Cardiac septum (tissue), 1 donor: ENCODE measurements at regions of chr13 and their contacts with region 1.

Region 1: DNA sequence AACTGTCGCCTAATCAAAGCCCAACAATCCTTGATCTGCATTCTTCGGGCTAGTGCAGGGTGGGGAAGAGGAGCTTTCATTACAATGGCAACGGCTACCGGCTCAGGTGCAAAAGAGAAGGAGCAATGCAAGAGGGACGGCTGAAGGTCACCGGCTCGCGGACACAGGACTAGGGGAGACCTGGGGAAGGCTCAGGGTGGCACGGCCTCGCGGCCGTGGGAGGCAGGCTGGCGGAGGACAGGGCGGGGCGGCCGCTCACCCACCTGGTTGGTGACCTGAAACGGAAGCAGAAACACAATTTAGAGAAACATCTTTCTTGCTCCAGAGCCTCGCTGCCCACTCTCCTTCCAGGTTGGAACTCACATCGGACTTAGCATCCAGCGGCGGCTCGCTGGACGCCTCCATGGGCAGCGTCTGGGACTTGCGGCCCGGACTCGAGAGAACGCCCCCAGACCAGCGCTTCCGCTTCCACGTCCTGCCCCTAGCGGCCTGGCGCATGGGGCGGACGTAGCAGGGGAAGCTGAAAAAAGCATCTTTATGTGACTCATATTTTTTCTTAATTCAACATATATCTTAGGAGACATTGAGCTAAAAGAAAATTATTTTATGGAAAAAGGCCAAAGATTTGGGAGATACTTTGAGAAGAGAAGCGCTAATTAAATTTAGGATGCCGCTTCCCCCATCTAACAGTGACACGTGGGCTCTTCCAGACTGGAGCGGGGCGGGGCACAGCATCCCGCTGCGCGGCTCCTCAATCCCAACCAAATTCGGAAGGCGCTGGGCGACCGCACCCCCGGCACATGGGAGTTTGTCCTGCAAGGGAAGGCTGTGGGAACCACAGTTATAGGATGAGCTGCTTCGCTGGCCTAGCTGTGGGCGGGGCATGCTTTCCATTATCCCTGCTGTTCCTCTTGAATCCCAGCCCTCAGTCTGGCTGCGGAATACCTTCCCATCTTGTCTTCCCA is at the start of gene COMMD6:
- DNase-seq: peak; percentile 91
- total RNA-seq, gene COMMD6: 127 TPM

Region 2: DNA sequence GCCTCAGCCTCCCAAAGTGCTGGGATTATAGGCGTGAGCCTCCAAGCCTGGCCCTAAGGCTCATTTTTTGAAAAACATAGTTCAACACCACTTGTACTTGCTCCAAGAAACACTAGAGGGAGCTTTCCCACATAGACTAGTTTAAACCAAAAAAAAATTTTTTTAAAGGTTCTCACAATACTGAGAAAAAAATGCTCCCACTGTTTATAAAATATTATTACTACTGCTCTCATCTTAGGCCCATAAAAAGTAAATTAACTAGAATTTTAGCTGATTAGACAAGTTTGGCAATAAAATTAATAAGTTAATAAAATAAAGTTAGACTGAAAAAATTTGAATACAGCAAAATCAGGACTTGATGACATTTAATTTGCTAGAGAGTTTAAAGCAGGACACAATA is 165.2 kb before region 1 on chr13:
- intact Hi-C with region 1: loop called (anchors 5 kb)
- DNase-seq: no peak